Activated naive CD4-positive, alpha-beta T cell treated with anti-CD3 and anti-CD28 coated beads, Interleukin-2, amount 10 ng/mL, durations not matched to agents 7 days and 5 days (primary cell): ENCODE measurements at regions of chr12 and their contacts with region 1.

Region 1: DNA sequence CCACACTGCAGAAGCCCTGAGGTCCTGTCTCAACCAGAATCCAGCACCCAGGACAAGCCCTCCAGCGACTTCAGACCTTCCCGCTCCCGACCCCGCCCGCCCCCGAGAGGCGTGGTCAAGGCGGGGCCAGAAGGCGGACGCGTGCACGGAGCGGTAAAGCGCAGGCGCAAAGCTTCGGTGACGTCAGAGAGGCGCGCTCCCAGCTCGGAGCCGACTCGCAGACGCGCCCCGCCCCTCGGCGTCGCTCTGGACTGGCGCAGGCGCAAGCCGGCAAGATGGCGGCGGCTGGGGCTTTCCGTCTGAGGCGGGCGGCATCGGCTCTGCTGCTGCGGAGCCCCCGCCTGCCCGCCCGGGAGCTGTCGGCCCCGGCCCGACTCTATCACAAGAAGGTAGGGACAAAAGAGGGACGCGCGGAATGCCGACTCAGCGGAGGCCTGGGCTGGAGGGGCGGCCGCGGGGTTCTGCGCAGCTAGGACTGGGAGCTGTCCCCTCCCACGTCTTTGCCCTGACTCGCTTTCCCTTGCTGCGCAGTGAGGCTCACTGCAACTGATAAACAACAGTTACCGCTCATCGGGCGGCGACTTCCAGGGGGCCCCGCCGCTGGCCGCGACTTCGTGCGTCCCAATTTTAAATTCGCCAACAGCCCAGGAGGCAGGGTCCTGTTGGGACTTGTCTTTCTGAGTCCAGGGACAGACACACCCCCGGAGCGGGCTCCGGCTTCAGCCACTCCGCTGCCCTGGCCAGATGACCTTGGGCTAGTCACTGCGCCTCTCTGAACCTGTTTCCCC is at the start of gene ISCU:
- DNase-seq: peak; percentile 99
- H3K4me3 Mint-ChIP-seq: peak within 1 kb of the TSS; percentile 98
- H3K27ac Mint-ChIP-seq: peak within 1 kb of the TSS; percentile 97
- H3K4me1 Mint-ChIP-seq: peaks cover 66% of the 10 kb centered on the region
- H3K27me3 Mint-ChIP-seq: no peaks in the 10 kb centered on the region

Region 2: DNA sequence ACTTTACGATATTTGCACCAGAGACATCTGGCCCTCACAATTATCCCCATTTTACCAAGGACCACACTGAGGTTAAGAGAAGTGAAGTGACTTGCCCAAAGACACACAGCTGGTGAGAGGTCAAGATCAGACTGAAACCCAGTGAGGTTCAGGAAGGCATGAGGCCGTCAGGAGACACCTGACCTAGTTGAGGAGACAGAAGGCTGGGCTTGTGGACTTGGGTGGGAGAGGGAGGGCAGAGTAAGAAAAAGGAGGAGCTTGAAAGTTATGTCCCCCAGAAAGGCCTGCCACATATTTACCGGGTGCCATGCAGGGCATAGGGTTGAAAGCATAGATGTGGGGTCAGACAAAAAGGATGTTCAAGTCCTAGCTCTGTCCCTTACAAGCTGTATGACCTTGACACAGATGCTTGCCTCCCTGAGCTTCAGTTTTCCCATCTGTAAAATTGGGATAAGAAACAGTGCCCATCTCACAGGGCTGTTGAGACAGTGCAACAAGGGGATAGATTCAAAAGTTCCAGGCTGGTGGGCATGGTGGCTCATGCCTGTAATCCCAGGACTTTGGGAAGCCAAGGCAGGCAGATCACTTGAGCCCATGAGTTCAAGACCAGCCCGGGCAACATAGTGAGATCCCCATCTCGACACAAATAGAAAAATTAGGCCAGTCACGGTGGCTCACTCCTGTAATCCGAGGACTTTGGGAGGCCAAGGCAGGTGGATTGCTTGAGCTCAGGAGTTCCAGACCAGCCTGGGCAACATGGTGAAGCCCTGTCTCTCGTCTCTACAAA is 64.8 kb after region 1 on chr12:
- CTCF ChIA-PET with region 1: interaction called, 268 read pairs
- DNase-seq: no peak
- H3K4me3 Mint-ChIP-seq: peak overlapping the region; percentile 45
- H3K27ac Mint-ChIP-seq: peak overlapping the region; percentile 70
- H3K4me1 Mint-ChIP-seq: peaks cover 75% of the 10 kb centered on the region
- H3K27me3 Mint-ChIP-seq: peaks cover 3% of the 10 kb centered on the region